ENCODE measurements at regions of chr14 and their contacts with region 1.

Region 1: DNA sequence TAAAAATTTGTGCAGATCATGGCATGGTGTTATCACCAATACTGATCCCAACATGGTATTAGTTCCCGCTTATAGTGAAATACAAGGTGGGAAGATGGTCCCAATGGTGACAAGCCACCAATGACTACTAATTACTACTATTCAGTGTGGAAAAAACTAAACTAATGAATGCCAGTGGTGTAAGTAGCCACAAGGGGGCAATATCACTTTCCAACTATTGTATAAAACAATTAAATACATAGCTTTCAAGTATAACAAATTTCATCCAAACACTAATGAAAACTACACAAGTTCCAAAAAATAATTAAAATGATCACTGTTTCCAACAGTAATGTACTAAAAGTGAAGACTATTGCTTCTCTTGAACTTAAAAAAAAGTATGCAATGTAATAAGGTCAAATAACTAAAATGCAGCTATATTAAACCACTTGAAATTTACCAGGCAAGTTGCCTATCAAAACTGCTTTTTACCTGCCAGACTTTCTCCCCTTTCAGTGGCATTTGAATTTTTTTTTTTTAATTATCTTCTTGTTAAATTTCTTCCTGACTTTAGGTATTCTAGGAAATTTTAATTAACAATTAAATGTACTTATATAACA is 58.0 kb downstream of the PAPLN start:
- DNase-seq: peak; percentile 71
- H3K4me3 ChIP-seq: no peak overlapping the region
- H3K27ac ChIP-seq: no peak overlapping the region
- H3K4me1 ChIP-seq: peaks cover 3% of the 10 kb centered on the region
- H3K27me3 ChIP-seq: no peaks in the 10 kb centered on the region
- CTCF ChIP-seq: peak; percentile 48 to 55
- POLR2A ChIP-seq: no peak

Region 2: GRCh38 chr14:73173092-73173735 is 122.1 kb before region 1 on chr14:
- CTCF ChIA-PET with region 1: interaction called, 48 read pairs
- POLR2A ChIA-PET with region 1: no interaction called
- dilution Hi-C with region 1: no loop called
- intact Hi-C with region 1: loop called (anchors 1 kb)
- DNase-seq: peak; percentile 73
- H3K4me3 ChIP-seq: no peak overlapping the region
- H3K27ac ChIP-seq: no peak overlapping the region
- H3K4me1 ChIP-seq: no peaks in the 10 kb centered on the region
- H3K27me3 ChIP-seq: no peaks in the 10 kb centered on the region
- CTCF ChIP-seq: peak; percentile 21 to 25
- POLR2A ChIP-seq: no peak

Region 3: DNA sequence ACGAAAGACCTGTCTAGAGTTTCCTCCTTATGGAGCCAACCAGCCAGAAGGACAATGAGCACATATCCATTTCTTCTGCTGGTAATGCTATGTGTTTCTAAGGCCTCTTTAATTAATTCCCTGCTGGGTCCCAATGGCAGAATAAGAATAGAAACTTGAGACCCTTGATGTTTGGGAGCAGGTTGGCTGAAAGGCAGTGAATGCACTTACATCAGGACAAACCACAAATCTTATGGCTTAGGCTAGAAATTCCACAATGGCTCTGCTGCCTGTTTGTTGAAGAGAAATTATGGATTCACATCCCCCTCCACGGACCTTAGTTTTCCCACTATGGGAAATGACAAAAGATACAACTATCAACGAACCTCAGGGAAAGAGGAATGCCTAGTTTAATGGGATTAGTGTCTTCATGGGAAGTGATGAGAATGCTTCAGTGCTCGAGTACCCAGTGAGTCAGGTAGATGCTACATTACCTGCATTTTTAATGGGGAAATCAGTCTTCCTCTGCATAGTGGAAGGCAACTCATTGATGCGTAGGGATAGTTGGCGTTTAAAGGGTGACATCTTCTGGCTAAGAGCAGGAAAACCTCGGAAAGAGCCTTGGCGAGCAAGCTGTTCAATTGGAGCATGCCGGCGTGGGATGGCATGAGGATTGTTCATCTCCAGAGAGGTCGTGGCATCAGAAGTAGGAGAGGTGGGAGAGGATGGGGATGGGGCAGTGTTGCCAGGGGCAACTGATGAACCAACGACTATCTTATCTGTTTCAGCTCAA is 11.5 kb before region 1 on chr14:
- CTCF ChIA-PET with region 1: interaction called, 12 read pairs
- POLR2A ChIA-PET with region 1: no interaction called
- dilution Hi-C with region 1: no loop called
- intact Hi-C with region 1: no loop called
- DNase-seq: no peak
- H3K4me3 ChIP-seq: no peak overlapping the region
- H3K27ac ChIP-seq: no peak overlapping the region
- H3K4me1 ChIP-seq: no peaks in the 10 kb centered on the region
- H3K27me3 ChIP-seq: no peaks in the 10 kb centered on the region
- CTCF ChIP-seq: peak in 1 of 2 donors; percentile 25
- POLR2A ChIP-seq: no peak

Region 4: GRCh38 chr14:73339846-73340595 is 44.7 kb after region 1 on chr14:
- CTCF ChIA-PET with region 1: interaction called, 10 read pairs
- POLR2A ChIA-PET with region 1: no interaction called
- dilution Hi-C with region 1: no loop called
- intact Hi-C with region 1: no loop called
- DNase-seq: no peak
- H3K4me3 ChIP-seq: no peak overlapping the region
- H3K27ac ChIP-seq: no peak overlapping the region
- H3K4me1 ChIP-seq: no peaks in the 10 kb centered on the region
- H3K27me3 ChIP-seq: no peaks in the 10 kb centered on the region
- CTCF ChIP-seq: no peak
- POLR2A ChIP-seq: no peak

Region 5: DNA sequence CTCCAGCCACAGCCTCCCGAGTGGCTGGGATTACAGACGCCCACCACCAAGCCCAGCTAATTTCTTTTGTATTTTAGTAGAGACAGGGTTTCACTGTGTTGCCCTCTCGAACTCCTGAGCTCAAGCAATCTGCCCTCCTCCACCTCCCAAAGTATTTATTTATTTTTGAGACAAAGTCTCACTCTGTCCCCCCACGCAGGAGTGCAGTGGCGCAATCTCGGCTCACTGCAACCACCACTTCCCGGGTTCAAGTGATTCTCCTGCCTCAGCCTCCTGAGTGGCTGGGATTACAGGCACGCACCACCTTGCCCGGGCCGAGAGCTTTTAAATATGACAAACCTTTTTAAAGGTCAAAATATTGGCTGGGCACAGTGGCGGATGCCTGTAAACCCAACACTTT is 148.5 kb after region 1 on chr14:
- CTCF ChIA-PET with region 1: interaction called, 18 read pairs
- POLR2A ChIA-PET with region 1: no interaction called
- dilution Hi-C with region 1: no loop called
- intact Hi-C with region 1: no loop called
- DNase-seq: no peak
- H3K4me3 ChIP-seq: no peak overlapping the region
- H3K27ac ChIP-seq: no peak overlapping the region
- H3K4me1 ChIP-seq: no peaks in the 10 kb centered on the region
- H3K27me3 ChIP-seq: no peaks in the 10 kb centered on the region
- CTCF ChIP-seq: no peak
- POLR2A ChIP-seq: no peak

Region 6: GRCh38 chr14:73472185-73473114 is 177.2 kb after region 1 on chr14:
- CTCF ChIA-PET with region 1: interaction called, 559 read pairs
- POLR2A ChIA-PET with region 1: interaction called, 4 read pairs
- dilution Hi-C with region 1: loop called (anchors 25 kb)
- intact Hi-C with region 1: loop called (anchors 1 kb)
- DNase-seq: peak; percentile 77
- H3K4me3 ChIP-seq: no peak overlapping the region
- H3K27ac ChIP-seq: no peak overlapping the region
- H3K4me1 ChIP-seq: no peaks in the 10 kb centered on the region
- H3K27me3 ChIP-seq: no peaks in the 10 kb centered on the region
- CTCF ChIP-seq: peak; percentile 45 to 48
- POLR2A ChIP-seq: no peak

Region 7: DNA sequence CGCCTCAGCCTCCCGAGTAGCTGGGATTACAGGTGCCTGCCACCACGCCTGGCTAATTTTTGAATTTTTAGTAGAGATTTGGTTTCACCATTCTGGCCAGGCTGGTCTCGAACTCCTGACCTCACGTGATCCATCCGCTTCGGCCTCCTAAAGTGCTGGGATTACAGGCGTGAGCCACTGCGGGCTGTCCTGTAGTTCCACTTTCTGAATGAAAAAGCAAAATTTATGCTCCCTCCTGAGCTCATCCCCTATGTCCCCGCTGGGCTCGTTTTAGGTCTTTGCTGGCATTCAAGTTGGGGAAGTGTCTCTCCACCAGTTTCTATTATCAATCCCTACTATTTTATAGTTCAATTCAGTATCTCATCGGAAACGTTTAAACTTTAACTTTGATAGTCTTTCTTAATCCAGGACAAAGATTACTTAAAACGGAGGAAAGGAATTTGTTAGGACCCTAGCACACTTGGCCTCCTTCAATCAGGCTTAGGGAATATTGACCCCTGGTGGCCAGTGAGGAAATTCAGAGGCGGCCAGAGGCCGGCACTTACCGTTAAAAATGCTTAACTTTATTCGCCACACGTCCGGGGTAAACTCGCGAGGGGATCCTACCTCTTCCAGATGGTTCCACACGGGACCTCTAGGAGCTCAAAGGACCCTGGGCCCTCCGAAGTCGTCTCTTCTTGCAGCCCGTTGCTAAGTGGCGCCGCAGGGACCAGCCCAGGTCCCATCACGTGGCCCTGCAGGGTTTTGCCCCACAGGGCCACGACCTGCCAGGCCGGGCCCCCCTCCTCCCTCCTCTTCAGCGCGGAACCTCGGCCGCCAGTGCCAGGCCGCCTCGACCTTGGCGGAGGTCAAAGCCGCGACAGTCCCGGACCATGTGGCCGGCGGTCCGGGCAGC is 338.1 kb after region 1 on chr14:
- CTCF ChIA-PET with region 1: interaction called, 20 read pairs
- POLR2A ChIA-PET with region 1: no interaction called
- dilution Hi-C with region 1: no loop called
- intact Hi-C with region 1: loop called (anchors 1 kb)
- DNase-seq: peak; percentile 71
- H3K4me3 ChIP-seq: peak overlapping the region; percentile 42 to 64 (median 58)
- H3K27ac ChIP-seq: no peak overlapping the region
- H3K4me1 ChIP-seq: peaks cover 9% of the 10 kb centered on the region
- H3K27me3 ChIP-seq: no peaks in the 10 kb centered on the region
- CTCF ChIP-seq: peak; percentile 73 to 84
- POLR2A ChIP-seq: no peak

Region 8: GRCh38 chr14:73666583-73666982 is 371.3 kb after region 1 on chr14:
- CTCF ChIA-PET with region 1: no interaction called
- POLR2A ChIA-PET with region 1: no interaction called
- dilution Hi-C with region 1: no loop called
- intact Hi-C with region 1: no loop called
- DNase-seq: no peak
- H3K4me3 ChIP-seq: no peak overlapping the region
- H3K27ac ChIP-seq: no peak overlapping the region
- H3K4me1 ChIP-seq: peaks cover 6% of the 10 kb centered on the region
- H3K27me3 ChIP-seq: no peaks in the 10 kb centered on the region
- CTCF ChIP-seq: no peak
- POLR2A ChIP-seq: no peak

Measured in endothelial cell of umbilical vein (primary cell).